ENCODE measurements at regions of chr11 and their contacts with region 1.

Region 1: DNA sequence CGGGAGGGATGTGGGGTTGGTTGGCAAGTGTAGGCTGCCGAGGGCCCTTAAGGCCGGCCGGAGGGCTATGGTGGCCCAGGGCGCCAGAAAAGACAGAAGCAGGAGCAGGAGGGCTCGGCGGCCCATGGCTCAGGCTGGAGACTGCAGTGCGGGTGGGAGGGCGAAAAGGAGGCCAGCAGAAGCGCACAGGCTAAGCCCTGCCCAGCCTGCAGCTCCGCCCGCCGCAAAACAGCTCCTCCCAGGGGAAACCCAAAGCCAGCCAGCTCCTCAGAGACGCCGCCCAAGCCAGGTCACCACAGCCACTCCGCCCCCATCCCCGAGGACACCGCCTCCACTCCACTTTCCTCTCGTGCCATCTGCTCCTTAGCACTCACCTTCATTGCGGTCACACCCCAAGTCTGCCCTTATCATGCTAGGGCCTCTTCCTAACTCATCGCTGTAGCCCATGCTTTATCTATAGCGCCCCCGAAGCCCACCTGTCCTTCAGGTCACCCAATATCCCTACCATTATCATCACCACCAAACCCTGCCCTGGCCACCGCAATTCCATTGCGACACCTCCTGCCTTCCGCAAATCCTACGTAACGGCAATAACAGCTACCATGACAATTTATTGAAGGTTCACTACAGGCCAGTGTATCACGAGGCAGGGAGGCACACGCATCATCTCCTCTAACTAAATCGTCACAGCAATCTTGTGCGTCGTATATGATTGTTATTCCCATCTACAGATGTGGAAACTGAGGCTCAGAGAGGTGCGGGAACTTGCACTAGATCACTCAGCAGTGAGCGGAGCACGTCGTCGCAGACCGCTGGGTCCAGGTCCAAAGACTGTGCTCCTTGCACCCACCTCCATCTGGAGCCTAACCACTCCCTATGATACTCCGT is at the start of gene PRCP:
- DNase-seq: peak; percentile 94
- H3K4me3 Mint-ChIP-seq: peak within 1 kb of the TSS; percentile 97
- H3K27ac Mint-ChIP-seq: peak within 1 kb of the TSS; percentile 100
- H3K4me1 Mint-ChIP-seq: peaks cover 43% of the 10 kb centered on the region
- H3K27me3 Mint-ChIP-seq: no peaks in the 10 kb centered on the region
- total RNA-seq, gene PRCP: 24.5 to 30.1 TPM

Region 2: DNA sequence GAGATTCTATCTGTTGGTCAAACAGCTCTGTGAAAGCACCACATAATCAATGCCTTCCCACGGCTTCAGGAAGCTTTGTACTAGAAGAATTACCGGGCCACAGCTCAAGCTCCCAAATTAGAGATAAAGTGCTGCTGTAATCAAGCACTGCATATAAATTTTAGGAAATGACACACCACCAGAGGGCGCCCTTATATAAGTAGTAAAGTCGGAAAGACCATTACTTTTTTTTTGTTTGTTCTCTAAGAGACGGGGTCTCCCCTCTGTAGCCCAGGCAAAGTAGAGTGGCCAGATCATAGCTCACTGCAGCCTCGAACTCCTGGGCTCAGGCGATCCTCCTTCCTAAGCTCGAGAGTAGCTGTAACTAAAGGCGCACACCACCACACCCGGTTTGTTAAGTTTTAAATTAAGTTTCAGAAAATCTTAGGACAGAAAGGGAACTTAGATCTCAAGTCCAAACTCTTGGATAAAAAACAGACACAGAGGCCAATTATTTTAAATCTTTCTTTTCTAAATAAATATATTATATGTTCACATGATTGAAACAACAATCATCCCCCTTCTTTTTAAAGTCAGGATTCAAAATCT is 32.9 kb before region 1 on chr11:
- CTCF ChIA-PET with region 1: interaction called, 71 read pairs
- POLR2A ChIA-PET with region 1: interaction called, 14 read pairs
- DNase-seq: peak; percentile 72
- H3K4me3 Mint-ChIP-seq: no peak overlapping the region
- H3K27ac Mint-ChIP-seq: no peak overlapping the region
- H3K4me1 Mint-ChIP-seq: peaks cover 11% of the 10 kb centered on the region
- H3K27me3 Mint-ChIP-seq: peaks cover 2% of the 10 kb centered on the region

Region 3: DNA sequence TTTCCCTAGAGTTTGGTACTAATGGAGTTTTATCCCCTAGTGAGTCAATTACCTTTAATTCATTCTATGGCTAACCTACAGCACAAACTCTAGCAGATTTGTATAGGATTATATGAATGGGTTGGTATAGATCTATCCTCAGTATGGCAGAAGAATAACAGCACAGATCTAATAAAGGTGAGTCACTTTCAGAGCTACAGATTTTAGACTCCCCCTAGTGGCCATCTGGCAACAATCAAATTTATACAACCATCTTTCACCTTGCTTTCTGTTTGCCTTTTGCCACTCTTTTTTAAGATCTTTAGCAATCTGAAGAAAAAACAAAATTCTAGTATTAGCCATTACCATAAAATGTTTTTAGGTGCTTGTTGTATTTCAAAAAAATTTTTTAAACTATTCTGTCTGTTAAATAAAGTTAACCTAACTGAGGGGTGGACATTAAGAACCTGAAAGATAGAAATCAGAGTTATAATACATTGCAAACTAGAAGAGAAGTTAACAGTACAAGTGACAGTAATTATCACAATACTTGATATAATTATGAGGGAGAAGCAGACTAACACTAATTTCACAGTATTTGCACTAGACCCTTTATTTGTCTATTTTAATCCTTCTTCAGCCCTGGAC is 26.8 kb after region 1 on chr11:
- CTCF ChIA-PET with region 1: interaction called, 5 read pairs
- POLR2A ChIA-PET with region 1: interaction called, 24 read pairs
- DNase-seq: no peak
- H3K4me3 Mint-ChIP-seq: no peak overlapping the region
- H3K27ac Mint-ChIP-seq: no peak overlapping the region
- H3K4me1 Mint-ChIP-seq: peaks cover 9% of the 10 kb centered on the region
- H3K27me3 Mint-ChIP-seq: no peaks in the 10 kb centered on the region

Region 4: GRCh38 chr11:83071567-83072349 is 171.2 kb after region 1 on chr11 and contains the start of gene RAB30:
- CTCF ChIA-PET with region 1: interaction called, 13 read pairs
- POLR2A ChIA-PET with region 1: interaction called, 24 read pairs
- DNase-seq: peak; percentile 95
- H3K4me3 Mint-ChIP-seq: no peak within 1 kb of the TSS
- H3K27ac Mint-ChIP-seq: no peak within 1 kb of the TSS
- H3K4me1 Mint-ChIP-seq: peaks cover 44% of the 10 kb centered on the region
- H3K27me3 Mint-ChIP-seq: no peaks in the 10 kb centered on the region
- total RNA-seq, gene RAB30: 9.9 to 10.2 TPM

Region 5: DNA sequence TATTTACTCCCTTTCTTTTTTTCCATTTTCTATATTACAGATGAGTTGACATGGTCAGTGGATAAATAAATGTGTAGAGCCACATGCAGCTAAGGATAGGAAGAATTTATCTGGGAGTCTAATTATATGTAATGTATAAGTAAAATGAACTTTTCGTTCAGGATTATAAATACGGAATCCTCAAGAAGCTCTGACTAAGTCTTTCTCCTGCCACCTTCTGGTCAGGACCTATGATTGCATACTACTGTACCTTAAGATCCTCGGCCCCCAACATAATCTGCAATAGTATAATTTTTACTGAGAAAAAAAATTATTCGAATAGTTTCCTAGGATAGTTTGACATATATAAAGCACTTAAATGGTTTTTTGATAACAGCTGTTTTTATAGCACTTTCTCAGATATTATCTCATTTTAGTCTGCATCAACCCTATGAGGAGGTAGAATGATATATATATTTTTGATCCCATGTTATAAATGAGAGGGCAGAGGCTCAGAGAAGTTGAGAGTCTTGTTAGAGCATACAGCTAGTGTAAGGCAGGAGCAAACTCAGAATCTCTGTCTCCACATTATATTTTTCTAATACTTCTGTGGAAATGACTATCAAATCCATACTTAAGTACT is 349.6 kb after region 1 on chr11:
- CTCF ChIA-PET with region 1: interaction called, 21 read pairs
- POLR2A ChIA-PET with region 1: interaction called, 12 read pairs
- DNase-seq: no peak
- H3K4me3 Mint-ChIP-seq: no peak overlapping the region
- H3K27ac Mint-ChIP-seq: no peak overlapping the region
- H3K4me1 Mint-ChIP-seq: peaks cover 10% of the 10 kb centered on the region
- H3K27me3 Mint-ChIP-seq: no peaks in the 10 kb centered on the region

Measured in activated CD4-positive, alpha-beta memory T cell treated with anti-CD3 and anti-CD28 coated beads, Interleukin-2, amount 10 ng/mL, durations not matched to agents 7 days and 5 days (primary cell).